ENCODE measurements at regions of chr13 and their contacts with region 1.

Region 1: DNA sequence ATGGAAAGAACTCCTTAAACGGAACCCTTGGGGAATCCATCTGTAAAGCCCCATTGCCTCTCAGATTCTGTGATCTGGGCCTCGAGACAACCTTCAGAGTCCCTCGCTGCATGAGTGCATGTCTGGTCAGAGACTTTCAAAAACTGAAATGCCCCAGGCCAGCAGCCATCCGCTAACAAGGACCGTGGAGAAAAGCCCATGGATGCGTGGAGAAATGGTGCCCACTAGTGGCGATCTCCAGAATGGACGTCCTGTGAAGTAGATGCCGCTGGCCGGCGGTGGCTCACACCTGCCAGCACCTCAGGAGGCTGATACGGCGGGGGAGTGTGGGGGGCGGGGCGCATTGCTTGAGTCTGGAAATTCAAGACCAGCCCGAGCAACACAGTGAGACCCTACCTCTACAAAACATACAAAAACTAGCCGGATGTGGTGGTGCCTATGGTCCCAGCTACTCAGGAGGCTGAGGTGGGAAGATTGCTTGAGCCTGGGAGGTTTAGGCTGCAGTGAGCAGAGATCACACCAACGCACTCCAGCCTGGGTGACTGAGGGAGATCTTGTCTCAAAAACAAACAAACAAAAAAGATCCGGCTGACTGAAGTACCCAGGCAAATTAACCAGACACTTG is 7.9 kb upstream of the CDC16 start:
- DNase-seq: peak; percentile 82 to 95 (median 89)
- ATAC-seq: peak; percentile 98
- H3K4me3 ChIP-seq: no peak overlapping the region
- H3K4me1 ChIP-seq: no peaks in the 10 kb centered on the region
- CTCF ChIP-seq: peak; percentile 80

Region 2: DNA sequence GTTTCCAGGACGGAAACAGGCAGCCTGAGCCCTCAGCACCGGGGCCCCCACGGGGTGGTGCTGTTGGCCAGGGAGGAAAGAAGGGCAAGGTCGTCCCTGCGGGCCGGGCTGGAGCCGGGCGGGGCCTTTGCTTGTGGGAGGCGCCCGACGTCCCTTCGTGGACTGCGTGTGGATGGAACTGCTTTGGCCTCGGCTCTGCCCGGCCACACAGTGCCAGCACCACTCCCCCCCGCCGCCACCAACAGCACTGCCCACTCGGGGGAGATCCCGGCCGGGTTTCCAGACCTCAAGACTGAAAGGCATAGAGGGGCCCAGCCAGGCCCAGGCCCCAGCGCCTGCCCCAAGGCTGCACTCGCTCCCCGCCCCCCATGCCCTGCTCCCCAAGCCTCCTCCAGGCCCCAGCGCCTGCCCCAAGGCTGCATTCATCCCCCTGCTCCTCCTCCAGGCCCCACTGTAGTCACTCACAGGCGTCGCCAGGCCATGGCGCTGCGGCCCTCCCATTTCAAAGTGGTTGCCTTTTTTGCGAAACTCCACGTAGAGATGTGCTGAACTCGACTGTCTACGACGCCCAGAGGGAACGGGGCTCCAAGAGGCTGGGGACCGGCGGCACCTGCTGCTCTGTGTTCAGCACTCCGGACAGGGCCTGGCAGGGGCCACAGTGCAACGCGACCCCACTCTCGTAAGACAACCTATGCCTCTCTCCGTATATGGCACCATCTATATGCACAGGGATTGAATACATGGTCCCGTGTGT is 275.4 kb before region 1 on chr13:
- intact Hi-C with region 1: loop called (anchors 2 to 5 kb)
- DNase-seq: peak; percentile 85 to 92 (median 88)
- ATAC-seq: peak; percentile 94
- H3K4me3 ChIP-seq: no peak overlapping the region
- H3K4me1 ChIP-seq: peaks cover 9% of the 10 kb centered on the region
- CTCF ChIP-seq: peak; percentile 80